ENCODE measurements at regions of chr6 and their contacts with region 1.

Region 1: GRCh38 chr6:31763619-31763940 is 1.1 kb downstream of the SAPCD1 start:
- DNase-seq: peak; percentile 68
- ATAC-seq: peak; percentile 10
- H3K4me3 ChIP-seq: no peak overlapping the region
- H3K27ac ChIP-seq: no peak overlapping the region
- H3K4me1 ChIP-seq: peaks cover 47% of the 10 kb centered on the region
- H3K27me3 ChIP-seq: no peaks in the 10 kb centered on the region
- CTCF ChIP-seq: peak; percentile 77
- EP300 ChIP-seq: no peak
- POLR2A ChIP-seq: no peak
- RAD21 ChIP-seq: no peak

Region 2: GRCh38 chr6:31752739-31753319 is 10.8 kb before region 1 on chr6:
- CTCF ChIA-PET with region 1: no interaction called
- POLR2A ChIA-PET with region 1: interaction called, 20 read pairs
- in situ Hi-C with region 1: no loop called
- intact Hi-C with region 1: no loop called
- DNase-seq: no peak
- ATAC-seq: peak; percentile 33; the same call in 1 of the 3 replicates
- H3K4me3 ChIP-seq: no peak overlapping the region
- H3K27ac ChIP-seq: no peak overlapping the region
- H3K4me1 ChIP-seq: peaks cover 11% of the 10 kb centered on the region
- H3K27me3 ChIP-seq: no peaks in the 10 kb centered on the region
- CTCF ChIP-seq: no peak
- EP300 ChIP-seq: no peak
- POLR2A ChIP-seq: no peak
- RAD21 ChIP-seq: no peak

Region 3: GRCh38 chr6:31851485-31851832 is 87.9 kb after region 1 on chr6:
- CTCF ChIA-PET with region 1: no interaction called
- POLR2A ChIA-PET with region 1: no interaction called
- in situ Hi-C with region 1: no loop called
- intact Hi-C with region 1: no loop called
- DNase-seq: no peak
- ATAC-seq: peak; percentile 9
- H3K4me3 ChIP-seq: no peak overlapping the region
- H3K27ac ChIP-seq: peak overlapping the region; percentile 43
- H3K4me1 ChIP-seq: peaks cover 35% of the 10 kb centered on the region
- H3K27me3 ChIP-seq: no peaks in the 10 kb centered on the region
- CTCF ChIP-seq: no peak
- EP300 ChIP-seq: no peak
- POLR2A ChIP-seq: no peak
- RAD21 ChIP-seq: no peak

Region 4: DNA sequence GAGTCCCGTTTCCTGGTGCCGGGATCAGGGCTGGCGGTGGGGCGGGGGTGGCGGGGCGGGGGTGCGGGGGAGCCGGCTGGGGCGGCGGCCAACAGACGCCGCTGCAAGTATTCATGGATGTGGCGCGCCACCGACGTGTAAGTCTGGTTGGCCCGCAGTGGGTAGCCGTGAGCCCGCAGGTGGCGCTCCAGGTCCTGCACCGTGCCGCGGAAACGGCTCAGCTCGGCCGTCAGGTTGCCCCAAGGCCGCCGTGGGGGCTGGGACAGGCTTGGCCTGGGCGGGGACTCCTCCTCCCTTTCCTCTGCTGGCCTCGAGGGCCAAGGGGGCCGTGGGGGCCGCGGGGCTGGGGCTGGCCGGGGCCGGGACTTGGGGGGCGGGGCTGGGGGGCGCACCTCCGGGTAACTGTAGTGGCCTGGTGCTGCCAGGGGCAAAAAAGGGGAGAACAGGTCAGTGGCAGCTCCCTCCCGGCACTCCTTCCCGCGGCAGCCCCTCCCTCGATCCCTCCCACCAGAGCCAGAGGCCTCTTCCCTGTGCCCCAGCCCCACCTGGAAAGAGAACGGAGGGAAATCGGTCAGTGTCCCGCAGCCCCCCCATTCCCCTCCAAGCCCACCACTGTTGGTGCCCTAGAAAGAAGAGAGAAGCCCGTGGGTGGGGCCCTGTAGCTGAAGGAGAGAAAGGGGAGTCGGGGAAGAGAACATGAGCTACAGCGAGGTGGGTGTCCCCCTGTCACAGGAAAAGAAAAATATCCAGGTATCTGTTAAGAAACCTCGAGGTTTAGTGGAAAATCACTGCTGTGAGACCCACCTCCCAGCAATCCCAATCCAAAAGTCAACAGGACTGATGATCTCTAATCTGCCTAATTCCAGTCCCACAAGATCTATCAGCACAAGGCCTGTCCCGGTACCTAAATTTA is 324.2 kb after region 1 on chr6:
- CTCF ChIA-PET with region 1: no interaction called
- POLR2A ChIA-PET with region 1: no interaction called
- in situ Hi-C with region 1: no loop called
- intact Hi-C with region 1: no loop called
- DNase-seq: peak; percentile 82
- ATAC-seq: peak; percentile 93
- H3K4me3 ChIP-seq: peak overlapping the region; percentile 37 to 62 (median 45); a peak in 4 of 6 replicates
- H3K27ac ChIP-seq: no peak overlapping the region
- H3K4me1 ChIP-seq: peaks cover 41% of the 10 kb centered on the region
- H3K27me3 ChIP-seq: peaks cover 4 to 31% of the 10 kb centered on the region in 2 experiments
- CTCF ChIP-seq: peak; percentile 93
- EP300 ChIP-seq: no peak
- POLR2A ChIP-seq: no peak
- RAD21 ChIP-seq: peak; percentile 96

Measured in HepG2 (cell line).